ENCODE measurements at regions of chr7 and their contacts with region 1.

Region 1: DNA sequence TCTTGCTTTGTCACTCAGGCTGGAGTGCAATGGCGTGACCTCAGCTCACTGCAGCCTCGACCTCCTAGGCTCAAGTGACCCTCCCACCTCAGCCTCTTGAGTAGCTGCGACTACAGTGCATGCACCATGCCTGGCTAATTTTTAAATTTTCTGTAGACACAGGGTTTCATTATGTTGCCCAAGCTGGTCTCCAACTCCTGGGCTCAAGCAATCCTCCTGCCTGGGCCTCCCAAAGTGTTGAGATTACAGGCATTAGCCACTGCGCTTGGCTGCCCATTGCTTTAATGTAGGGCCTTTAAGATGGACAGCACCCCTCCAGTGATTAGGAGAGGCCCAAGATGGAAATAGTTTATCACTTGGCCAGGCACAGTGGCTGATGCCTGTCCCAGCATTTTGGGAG is 39.4 kb downstream of the NIPSNAP2 start:
- DNase-seq: no peak
- ATAC-seq: no peak
- H3K4me3 ChIP-seq: no peak overlapping the region
- H3K27ac ChIP-seq: no peak overlapping the region
- H3K4me1 ChIP-seq: no peaks in the 10 kb centered on the region
- H3K27me3 ChIP-seq: no peaks in the 10 kb centered on the region
- CTCF ChIP-seq: no peak
- POLR2A ChIP-seq: no peak
- RAD21 ChIP-seq: no peak

Region 2: GRCh38 chr7:55618913-55619312 is 384.8 kb before region 1 on chr7:
- CTCF ChIA-PET with region 1: no interaction called
- POLR2A ChIA-PET with region 1: no interaction called
- RAD21 ChIA-PET with region 1: no interaction called
- intact Hi-C with region 1: no loop called
- DNase-seq: no peak
- ATAC-seq: no peak
- H3K4me3 ChIP-seq: no peak overlapping the region
- H3K27ac ChIP-seq: no peak overlapping the region
- H3K4me1 ChIP-seq: no peaks in the 10 kb centered on the region
- H3K27me3 ChIP-seq: no peaks in the 10 kb centered on the region
- CTCF ChIP-seq: no peak
- POLR2A ChIP-seq: no peak
- RAD21 ChIP-seq: no peak

Region 3: DNA sequence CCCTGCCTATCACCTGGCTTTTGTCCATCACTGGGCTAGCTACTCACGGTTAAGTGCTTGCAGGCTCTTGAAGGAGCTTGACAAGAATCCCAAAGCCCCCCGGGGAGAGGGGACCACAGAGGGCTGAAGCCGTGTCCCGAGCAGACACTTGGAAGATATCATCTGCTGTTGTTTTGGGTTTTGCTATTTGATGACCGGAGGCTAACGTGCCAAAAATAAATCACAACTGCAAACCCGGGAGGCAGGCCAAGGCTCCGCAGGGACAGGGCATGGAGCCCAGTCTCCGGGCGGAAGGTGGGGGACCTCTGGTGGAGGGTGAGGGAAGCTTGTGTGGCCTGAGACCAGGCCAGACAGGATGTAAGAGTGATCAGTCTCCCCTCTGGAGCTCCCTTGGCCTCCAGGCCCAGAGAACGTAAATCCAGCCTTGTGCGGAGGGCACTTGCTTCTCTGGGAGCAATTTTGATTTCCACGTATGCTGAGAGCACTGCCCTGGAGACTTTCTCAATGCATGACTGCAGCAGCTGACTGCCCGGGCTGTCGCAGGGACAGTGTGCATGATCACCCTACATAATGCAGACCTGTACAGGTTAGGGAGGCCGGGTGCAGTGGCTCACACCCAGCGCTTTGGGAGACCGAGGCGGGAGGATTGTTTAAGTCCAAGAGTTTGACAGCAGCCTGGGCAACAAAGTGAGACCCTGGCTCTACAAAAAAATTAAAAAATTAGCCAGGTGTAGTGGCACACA is 89.2 kb after region 1 on chr7 and contains the start of gene PHKG1:
- CTCF ChIA-PET with region 1: no interaction called
- POLR2A ChIA-PET with region 1: interaction called, 3 read pairs
- RAD21 ChIA-PET with region 1: no interaction called
- intact Hi-C with region 1: loop called (anchors 5 kb)
- DNase-seq: no peak
- ATAC-seq: peak; percentile 95
- H3K4me3 ChIP-seq: no peak within 1 kb of the TSS
- H3K27ac ChIP-seq: peak within 1 kb of the TSS; percentile 29; the same call in 1 of the 2 replicates
- H3K4me1 ChIP-seq: peaks cover 4 to 8% of the 10 kb centered on the region in 2 experiments; a peak in 3 of 4 replicates
- H3K27me3 ChIP-seq: no peaks in the 10 kb centered on the region
- CTCF ChIP-seq: peak; percentile 39 to 54 (median 54); a peak in 5 of 6 replicates
- POLR2A ChIP-seq: no peak
- RAD21 ChIP-seq: peak; percentile 59
- total RNA-seq, gene PHKG1: 1.1 TPM

Measured in HCT116 (cell line).